Activated CD4-positive, alpha-beta memory T cell treated with anti-CD3 and anti-CD28 coated beads for 36 hours (primary cell): ENCODE measurements at regions of chr3 and their contacts with region 1.

Region 1: DNA sequence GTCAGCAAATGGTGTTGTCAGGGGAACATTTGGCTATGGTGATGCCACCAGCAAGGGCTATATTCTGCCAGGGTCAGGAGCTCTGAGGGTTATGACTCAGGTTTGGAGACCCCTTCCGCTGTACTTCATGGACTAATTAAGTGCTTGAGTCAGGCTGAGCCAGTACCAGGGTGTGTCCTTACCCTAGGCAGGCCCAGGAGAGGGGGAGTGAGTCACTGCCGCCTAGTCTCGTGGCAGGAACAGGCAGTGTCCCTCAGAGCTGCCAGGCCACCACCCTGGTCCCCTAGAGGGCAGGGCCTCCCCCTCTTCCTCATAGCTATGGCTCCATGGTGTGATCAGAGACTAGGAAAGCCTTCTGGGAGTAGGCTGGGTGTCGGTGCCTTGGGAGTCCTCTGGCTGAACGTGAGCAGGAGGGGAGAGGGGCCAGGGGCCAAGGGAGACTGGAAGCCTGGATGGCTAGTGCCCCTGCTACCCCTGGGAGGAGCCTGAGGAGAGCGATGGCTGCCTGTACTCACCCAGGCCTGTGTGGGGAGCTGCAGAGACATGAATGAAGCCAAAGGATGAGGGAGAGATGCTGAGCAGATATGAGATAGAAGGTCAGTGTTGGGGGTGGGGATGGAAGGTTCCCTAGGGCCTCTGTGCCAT is 10.6 kb downstream of the MAPKAPK3 start:
- DNase-seq: peak; percentile 59
- H3K4me3 Mint-ChIP-seq: no peak overlapping the region
- H3K27ac Mint-ChIP-seq: peak overlapping the region; percentile 84
- H3K4me1 Mint-ChIP-seq: peaks cover 98% of the 10 kb centered on the region
- H3K27me3 Mint-ChIP-seq: no peaks in the 10 kb centered on the region

Region 2: DNA sequence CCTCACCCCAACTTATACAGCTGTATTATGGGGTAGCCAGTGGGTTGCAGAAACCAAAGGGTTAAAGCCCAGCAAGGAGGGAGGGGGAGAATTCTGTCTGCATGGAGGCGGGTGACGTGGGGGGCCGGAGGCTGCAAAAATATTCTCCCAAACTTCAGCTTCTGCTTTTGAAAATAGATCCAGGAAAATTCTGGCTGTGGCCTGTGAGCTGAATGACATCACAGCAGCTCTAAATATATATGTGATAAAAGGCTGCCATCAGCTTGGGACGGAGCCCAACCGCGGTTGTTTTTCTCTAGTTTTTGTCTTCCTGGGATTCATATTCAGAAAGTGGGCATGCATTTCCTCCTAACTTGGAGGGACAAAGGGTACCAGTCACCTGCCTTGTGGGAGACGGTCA is 17.0 kb after region 1 on chr3:
- CTCF ChIA-PET with region 1: no interaction called
- POLR2A ChIA-PET with region 1: no interaction called
- intact Hi-C with region 1: loop called (anchors 1 kb)
- DNase-seq: no peak
- H3K4me3 Mint-ChIP-seq: no peak overlapping the region
- H3K27ac Mint-ChIP-seq: no peak overlapping the region
- H3K4me1 Mint-ChIP-seq: peaks cover 14% of the 10 kb centered on the region
- H3K27me3 Mint-ChIP-seq: no peaks in the 10 kb centered on the region

Region 3: DNA sequence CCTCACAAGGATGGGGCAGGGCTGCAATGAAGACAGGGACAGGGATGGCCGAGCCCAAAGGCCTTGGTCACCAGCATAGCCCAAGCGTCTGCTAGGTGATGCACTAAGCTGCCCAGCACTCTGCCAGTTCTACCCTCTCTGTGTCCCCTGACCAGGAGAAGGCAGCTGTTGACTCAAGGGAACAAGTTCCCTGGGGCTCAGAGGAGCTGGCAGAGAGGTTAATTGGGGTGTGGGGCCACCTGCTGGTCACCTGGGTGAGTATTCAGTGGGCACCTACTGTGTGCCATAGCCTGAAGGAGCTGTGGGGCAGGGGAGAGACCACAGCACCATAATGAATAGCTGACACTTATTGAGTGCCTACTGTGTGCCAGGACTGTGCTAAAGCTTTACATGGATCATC is 25.2 kb after region 1 on chr3:
- CTCF ChIA-PET with region 1: interaction called, 22 read pairs
- POLR2A ChIA-PET with region 1: interaction called, 8 read pairs
- intact Hi-C with region 1: loop called (anchors 1 kb)
- DNase-seq: peak; percentile 77
- H3K4me3 Mint-ChIP-seq: no peak overlapping the region
- H3K27ac Mint-ChIP-seq: peak overlapping the region; percentile 19
- H3K4me1 Mint-ChIP-seq: peaks cover 28% of the 10 kb centered on the region
- H3K27me3 Mint-ChIP-seq: no peaks in the 10 kb centered on the region